GM10248 (cell line): ENCODE measurements at regions of chr1 and their contacts with region 1.

Region 1: DNA sequence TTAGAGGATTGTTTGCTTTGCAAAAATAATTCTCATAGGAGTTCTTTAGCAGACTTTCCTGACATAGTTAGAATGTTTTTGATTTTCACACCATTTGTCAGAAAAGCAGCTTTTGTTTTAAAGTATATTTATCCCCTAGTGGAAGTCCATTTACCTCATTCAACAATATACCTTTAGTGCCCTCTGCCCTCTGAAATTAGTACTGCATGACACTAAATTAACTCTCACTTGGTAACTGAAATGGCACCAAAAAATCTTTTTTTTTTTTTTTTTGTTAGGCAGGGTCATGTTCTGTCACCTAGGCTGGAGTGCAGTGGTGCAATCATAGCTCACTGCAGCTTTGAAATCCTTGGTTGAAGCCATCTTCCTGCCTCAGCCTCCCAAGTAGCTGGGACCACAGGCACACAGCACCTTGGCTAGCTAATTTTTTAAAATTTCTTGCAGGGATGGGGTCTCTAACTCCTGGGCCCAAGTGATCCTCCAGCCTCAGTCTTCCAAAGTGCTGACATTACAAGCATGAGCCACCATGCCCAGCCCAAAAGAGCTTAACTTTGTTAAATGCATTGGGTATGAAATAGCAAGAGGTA is 13.6 kb downstream of the LRRC42 start:
- DNase-seq: peak; percentile 42
- CTCF ChIP-seq: peak; percentile 55

Region 2: DNA sequence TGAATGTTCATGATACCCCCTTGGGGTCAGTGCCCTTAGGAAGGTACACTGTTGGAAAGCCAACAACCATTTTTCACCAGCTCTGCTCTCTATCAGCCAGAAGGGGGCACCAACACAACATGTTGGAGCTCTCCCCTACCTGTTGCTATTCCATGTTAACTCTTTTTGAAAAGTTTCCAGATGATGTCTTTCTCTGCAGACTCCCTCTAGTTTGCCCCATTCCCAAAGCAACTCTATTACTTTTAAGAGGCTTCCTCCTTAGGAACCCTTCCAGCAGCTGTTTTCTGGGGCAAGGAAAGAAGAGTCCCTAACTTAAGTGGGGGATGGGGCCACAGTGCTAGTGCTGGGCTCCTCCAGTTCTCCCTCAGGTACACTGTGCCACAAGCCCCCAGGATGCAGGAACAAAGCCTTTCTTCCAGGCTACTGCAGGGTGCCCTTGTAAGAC is 98.8 kb before region 1 on chr1:
- CTCF ChIA-PET with region 1: interaction called, 129 read pairs
- POLR2A ChIA-PET with region 1: no interaction called
- DNase-seq: peak; percentile 58
- CTCF ChIP-seq: peak; percentile 83

Region 3: DNA sequence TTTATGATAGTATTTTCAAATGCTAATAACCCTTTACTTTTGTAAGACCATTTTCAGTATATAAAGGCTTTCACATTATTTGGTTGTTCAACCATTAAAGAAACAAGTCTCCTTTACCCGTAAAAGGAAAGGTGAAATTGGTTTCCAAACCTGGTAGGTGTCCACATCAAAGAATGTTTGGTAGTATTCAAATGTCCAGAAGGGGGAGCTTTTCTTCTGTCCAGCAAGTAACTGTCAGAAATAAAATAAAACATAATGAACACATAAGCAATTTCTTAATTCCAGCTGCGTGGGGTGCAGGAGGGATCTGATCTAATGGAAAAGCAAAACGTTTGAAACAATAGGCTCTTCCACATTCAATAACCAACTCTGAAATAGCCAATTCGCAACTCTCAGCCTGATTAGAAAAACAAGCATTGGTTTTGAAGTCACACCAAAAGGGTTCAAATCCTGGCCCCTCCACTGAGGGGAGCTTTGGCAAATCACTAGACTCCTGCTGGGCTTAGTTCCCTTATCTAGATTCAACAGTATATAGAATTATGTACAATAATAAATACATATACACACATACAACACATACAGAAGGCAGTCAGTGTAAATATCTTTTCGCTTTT is 81.2 kb before region 1 on chr1:
- CTCF ChIA-PET with region 1: interaction called, 60 read pairs
- POLR2A ChIA-PET with region 1: no interaction called
- DNase-seq: peak; percentile 43
- CTCF ChIP-seq: peak; percentile 47

Region 4: GRCh38 chr1:53945433-53946251 is 14.1 kb before region 1 on chr1 and contains the start of gene IFT25:
- CTCF ChIA-PET with region 1: interaction called, 46 read pairs
- POLR2A ChIA-PET with region 1: interaction called, 3 read pairs
- DNase-seq: peak; percentile 95
- CTCF ChIP-seq: no peak

Region 5: DNA sequence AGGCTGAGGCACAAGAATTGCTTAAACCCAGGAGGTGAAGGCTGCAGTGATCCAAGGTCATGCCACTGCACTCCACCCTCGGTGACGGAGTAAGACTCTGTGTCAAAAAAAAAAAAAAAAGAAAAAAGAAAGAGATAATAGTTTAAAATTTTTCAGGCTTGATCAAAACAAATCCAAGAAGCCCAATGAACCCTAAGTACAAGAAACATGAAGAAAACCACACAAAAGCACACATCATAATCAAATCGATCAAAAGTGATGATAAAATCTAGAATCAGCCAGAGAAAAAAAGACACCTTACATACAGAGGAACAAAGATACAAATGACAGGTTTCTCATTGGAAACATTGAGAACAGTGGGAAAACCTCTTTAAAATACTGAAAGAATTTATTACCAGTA is 26.7 kb after region 1 on chr1:
- CTCF ChIA-PET with region 1: no interaction called
- POLR2A ChIA-PET with region 1: no interaction called
- DNase-seq: no peak
- CTCF ChIP-seq: no peak

Region 6: DNA sequence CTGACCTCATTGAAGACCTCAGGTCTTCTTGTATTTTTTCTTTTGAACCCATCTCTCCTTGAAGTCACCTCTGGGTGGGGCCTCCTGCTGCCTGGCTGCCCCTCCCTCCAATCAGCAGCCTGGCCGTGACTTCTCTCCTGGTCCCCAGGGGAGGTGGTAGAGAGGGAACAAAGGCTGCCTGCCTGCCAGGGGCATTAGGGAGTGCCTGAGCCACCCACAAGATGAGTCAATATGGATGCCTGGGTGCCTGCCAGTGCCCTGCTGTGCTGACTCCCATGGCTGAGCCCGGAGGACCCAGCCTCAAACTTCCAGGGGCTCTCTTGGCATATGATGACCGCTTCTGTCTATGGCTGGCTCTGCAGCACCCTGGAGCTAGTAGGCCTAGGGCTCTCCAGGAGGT is 198.3 kb after region 1 on chr1:
- CTCF ChIA-PET with region 1: no interaction called
- POLR2A ChIA-PET with region 1: no interaction called
- DNase-seq: no peak
- CTCF ChIP-seq: no peak